Activated CD4-positive, alpha-beta T cell treated with anti-CD3 and anti-CD28 coated beads for 36 hours (primary cell): ENCODE measurements at regions of chr17 and their contacts with region 1.

Region 1: DNA sequence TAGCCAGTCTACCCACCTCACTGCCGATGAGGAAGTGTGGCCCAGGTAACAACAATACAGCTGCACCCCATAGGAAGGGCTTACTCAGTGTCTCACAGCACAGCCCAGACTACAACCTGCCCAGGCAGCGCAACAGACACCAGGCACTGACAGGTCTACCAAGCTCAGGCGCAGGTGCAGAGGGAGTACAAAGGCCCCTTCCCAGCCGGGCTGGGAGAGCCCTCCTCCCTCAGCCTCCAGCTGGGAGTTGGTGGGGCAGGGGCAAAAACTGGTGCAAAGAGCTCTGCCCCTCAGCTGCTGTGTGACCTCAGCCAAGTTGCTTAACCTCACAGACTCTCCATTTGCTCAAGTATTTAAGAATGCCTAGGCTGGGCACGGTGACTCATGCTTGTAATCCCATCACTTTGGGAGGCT is 112.6 kb upstream of the LHX1 start:
- DNase-seq: no peak
- ATAC-seq: no peak
- H3K4me3 Mint-ChIP-seq: no peak overlapping the region
- H3K27ac Mint-ChIP-seq: no peak overlapping the region
- H3K4me1 Mint-ChIP-seq: no peaks in the 10 kb centered on the region
- H3K27me3 Mint-ChIP-seq: peaks cover 34% of the 10 kb centered on the region

Region 2: GRCh38 chr17:36888236-36888951 is 63.7 kb after region 1 on chr17:
- CTCF ChIA-PET with region 1: no interaction called
- POLR2A ChIA-PET with region 1: no interaction called
- intact Hi-C with region 1: loop called in 1 of 2 experiments (anchors 10 kb)
- DNase-seq: no peak
- ATAC-seq: no peak
- H3K4me3 Mint-ChIP-seq: no peak overlapping the region
- H3K27ac Mint-ChIP-seq: no peak overlapping the region
- H3K4me1 Mint-ChIP-seq: no peaks in the 10 kb centered on the region
- H3K27me3 Mint-ChIP-seq: peaks cover 25% of the 10 kb centered on the region